Activated naive CD4-positive, alpha-beta T cell treated with anti-CD3 and anti-CD28 coated beads for 36 hours (primary cell): ENCODE measurements at regions of chr1 and their contacts with region 1.

Region 1: DNA sequence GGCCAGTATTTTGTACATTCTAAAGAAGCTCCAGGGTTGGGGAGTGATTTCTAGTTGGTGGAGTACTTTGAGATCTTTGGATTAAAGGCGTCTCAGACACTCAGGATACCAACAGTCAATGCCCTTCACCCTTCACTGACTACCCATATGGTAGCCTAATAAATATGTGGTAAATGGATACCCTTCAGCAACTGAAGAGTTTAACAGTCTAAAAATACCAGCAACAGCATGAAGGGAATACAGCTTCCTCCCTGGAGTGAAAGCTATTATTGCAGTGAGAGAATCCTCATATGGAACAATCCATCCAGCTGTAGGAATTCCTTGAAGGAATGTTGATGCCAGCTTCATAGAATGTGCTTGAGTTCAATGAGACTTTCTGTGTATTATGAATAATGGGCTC is 26.8 kb downstream of the DNAJC11 start:
- DNase-seq: no peak
- H3K4me3 Mint-ChIP-seq: no peak overlapping the region
- H3K27ac Mint-ChIP-seq: no peak overlapping the region
- H3K4me1 Mint-ChIP-seq: peaks cover 2% of the 10 kb centered on the region
- H3K27me3 Mint-ChIP-seq: no peaks in the 10 kb centered on the region

Region 2: GRCh38 chr1:6454856-6455751 is 219.7 kb before region 1 on chr1:
- CTCF ChIA-PET with region 1: no interaction called
- intact Hi-C with region 1: no loop called
- DNase-seq: no peak
- H3K4me3 Mint-ChIP-seq: no peak overlapping the region
- H3K27ac Mint-ChIP-seq: no peak overlapping the region
- H3K4me1 Mint-ChIP-seq: peaks cover 19% of the 10 kb centered on the region
- H3K27me3 Mint-ChIP-seq: peaks cover 43% of the 10 kb centered on the region

Region 3: GRCh38 chr1:6560267-6560666 is 114.5 kb before region 1 on chr1:
- CTCF ChIA-PET with region 1: no interaction called
- intact Hi-C with region 1: no loop called
- DNase-seq: no peak
- H3K4me3 Mint-ChIP-seq: no peak overlapping the region
- H3K27ac Mint-ChIP-seq: no peak overlapping the region
- H3K4me1 Mint-ChIP-seq: no peaks in the 10 kb centered on the region
- H3K27me3 Mint-ChIP-seq: no peaks in the 10 kb centered on the region

Region 4: DNA sequence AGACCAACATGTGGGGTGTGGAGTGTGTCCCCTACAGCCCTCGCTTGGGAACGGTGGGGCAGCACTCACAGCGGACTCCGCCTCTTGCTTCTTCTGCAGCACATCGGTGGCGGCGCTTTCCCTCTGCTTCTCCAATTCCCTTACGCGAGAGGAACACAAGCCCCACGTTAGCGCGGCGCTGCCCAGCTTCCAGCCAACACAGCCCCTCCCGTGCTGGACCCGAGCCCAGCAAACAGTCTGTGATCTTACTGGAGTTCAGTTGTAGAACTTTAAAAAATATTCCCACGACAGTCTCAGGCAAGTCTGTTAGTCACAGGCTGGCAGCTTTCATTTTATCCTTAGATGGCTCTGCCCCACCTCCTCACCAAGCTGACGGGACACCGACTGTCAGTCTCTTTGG is 36.5 kb before region 1 on chr1:
- CTCF ChIA-PET with region 1: no interaction called
- intact Hi-C with region 1: no loop called
- DNase-seq: no peak
- H3K4me3 Mint-ChIP-seq: no peak overlapping the region
- H3K27ac Mint-ChIP-seq: no peak overlapping the region
- H3K4me1 Mint-ChIP-seq: no peaks in the 10 kb centered on the region
- H3K27me3 Mint-ChIP-seq: no peaks in the 10 kb centered on the region

Region 5: DNA sequence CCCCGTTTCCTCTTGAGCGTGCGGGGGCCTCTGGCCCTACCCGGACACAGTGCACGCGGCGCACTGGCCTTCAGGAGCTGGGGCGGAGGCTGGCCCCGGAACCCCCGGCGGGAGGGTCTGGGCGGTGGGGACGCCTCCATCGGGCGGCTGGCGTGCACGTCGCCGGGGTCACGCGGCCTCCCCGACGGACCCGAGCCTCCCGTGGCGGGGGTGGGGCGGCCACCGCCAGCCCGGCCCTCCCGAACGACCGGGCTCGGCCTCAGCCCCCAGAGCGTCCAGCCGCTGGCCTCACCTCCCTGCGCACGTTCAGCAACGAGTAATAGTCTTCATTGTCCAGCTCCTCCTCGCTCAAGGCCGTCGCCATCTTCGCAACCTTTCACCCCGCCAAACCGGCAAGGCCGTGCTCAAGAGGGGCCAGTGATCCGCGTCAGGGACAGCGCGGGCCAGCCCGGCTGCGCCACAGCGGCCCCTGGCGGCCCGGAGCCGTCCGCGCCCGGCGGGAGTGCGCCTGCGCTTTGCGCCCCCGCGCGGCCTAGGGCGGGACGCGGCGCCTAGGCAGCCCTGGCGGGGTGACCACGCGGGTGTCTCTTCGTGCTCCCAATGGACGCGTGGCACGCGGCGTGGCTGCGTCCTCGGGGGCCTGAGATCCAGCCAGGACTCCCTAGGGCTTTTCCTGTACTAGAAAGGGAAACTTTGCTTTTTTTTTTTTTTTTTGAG is 26.8 kb after region 1 on chr1 and contains the start of gene DNAJC11:
- CTCF ChIA-PET with region 1: interaction called, 10 read pairs
- intact Hi-C with region 1: no loop called
- DNase-seq: peak; percentile 91
- H3K4me3 Mint-ChIP-seq: peak within 1 kb of the TSS; percentile 88
- H3K27ac Mint-ChIP-seq: peak within 1 kb of the TSS; percentile 86
- H3K4me1 Mint-ChIP-seq: peaks cover 31% of the 10 kb centered on the region
- H3K27me3 Mint-ChIP-seq: no peaks in the 10 kb centered on the region
- total RNA-seq, gene DNAJC11: 31.6 to 32.5 TPM